GM12878 (cell line): ENCODE measurements at regions of chr7 and their contacts with region 1.

Region 1: GRCh38 chr7:114865564-114865963 is 56.3 kb upstream of the MDFIC start:
- DNase-seq: peak; percentile 25
- ATAC-seq: peak; percentile 99
- H3K4me3 ChIP-seq: no peak overlapping the region
- H3K27ac ChIP-seq: no peak overlapping the region
- H3K4me1 ChIP-seq: no peaks in the 10 kb centered on the region
- H3K27me3 ChIP-seq: no peaks in the 10 kb centered on the region
- CTCF ChIP-seq: peak; percentile 78 to 88 (median 79)
- EP300 ChIP-seq: no peak
- POLR2A ChIP-seq: no peak
- RAD21 ChIP-seq: peak; percentile 98

Region 2: GRCh38 chr7:114548081-114548980 is 317.2 kb before region 1 on chr7:
- CTCF ChIA-PET with region 1: no interaction called
- POLR2A ChIA-PET with region 1: no interaction called
- RAD21 ChIA-PET with region 1: no interaction called
- SMC1A ChIA-PET with region 1: no interaction called
- in situ Hi-C with region 1: no loop called
- intact Hi-C with region 1: no loop called
- DNase-seq: no peak
- ATAC-seq: peak; percentile 49
- H3K4me3 ChIP-seq: no peak overlapping the region
- H3K27ac ChIP-seq: no peak overlapping the region
- H3K4me1 ChIP-seq: no peaks in the 10 kb centered on the region
- H3K27me3 ChIP-seq: no peaks in the 10 kb centered on the region
- CTCF ChIP-seq: no peak
- EP300 ChIP-seq: no peak
- POLR2A ChIP-seq: no peak
- RAD21 ChIP-seq: no peak

Region 3: GRCh38 chr7:114806590-114807162 is 58.9 kb before region 1 on chr7:
- CTCF ChIA-PET with region 1: no interaction called
- POLR2A ChIA-PET with region 1: no interaction called
- RAD21 ChIA-PET with region 1: no interaction called
- SMC1A ChIA-PET with region 1: no interaction called
- in situ Hi-C with region 1: no loop called
- intact Hi-C with region 1: no loop called
- DNase-seq: no peak
- ATAC-seq: no peak
- H3K4me3 ChIP-seq: no peak overlapping the region
- H3K27ac ChIP-seq: no peak overlapping the region
- H3K4me1 ChIP-seq: no peaks in the 10 kb centered on the region
- H3K27me3 ChIP-seq: no peaks in the 10 kb centered on the region
- CTCF ChIP-seq: no peak
- EP300 ChIP-seq: no peak
- POLR2A ChIP-seq: no peak
- RAD21 ChIP-seq: no peak

Region 4: GRCh38 chr7:114916261-114916892 is 50.8 kb after region 1 on chr7:
- CTCF ChIA-PET with region 1: interaction called, 9 read pairs
- POLR2A ChIA-PET with region 1: interaction called, 5 read pairs
- RAD21 ChIA-PET with region 1: interaction called, 23 read pairs
- SMC1A ChIA-PET with region 1: interaction called, 33 read pairs
- in situ Hi-C with region 1: no loop called
- intact Hi-C with region 1: loop called (anchors 2 kb)
- DNase-seq: peak; percentile 85
- ATAC-seq: peak; percentile 91
- H3K4me3 ChIP-seq: peak overlapping the region; percentile 54; the same call in 1 of the 2 replicates
- H3K27ac ChIP-seq: peak overlapping the region; percentile 95
- H3K4me1 ChIP-seq: peaks cover 19% of the 10 kb centered on the region
- H3K27me3 ChIP-seq: no peaks in the 10 kb centered on the region
- CTCF ChIP-seq: no peak
- EP300 ChIP-seq: peak in 1 of 2 experiments; percentile 93; a peak in 3 of 4 replicates
- POLR2A ChIP-seq: peak; percentile 78
- RAD21 ChIP-seq: no peak

Region 5: GRCh38 chr7:114939484-114940097 is 74.0 kb after region 1 on chr7:
- CTCF ChIA-PET with region 1: interaction called, 107 read pairs
- POLR2A ChIA-PET with region 1: interaction called, 3 read pairs
- RAD21 ChIA-PET with region 1: interaction called, 109 read pairs
- SMC1A ChIA-PET with region 1: interaction called, 150 read pairs
- in situ Hi-C with region 1: no loop called
- intact Hi-C with region 1: loop called (anchors 5 kb)
- DNase-seq: no peak
- ATAC-seq: peak; percentile 51
- H3K4me3 ChIP-seq: no peak overlapping the region
- H3K27ac ChIP-seq: no peak overlapping the region; the same call in 1 of the 2 replicates
- H3K4me1 ChIP-seq: peaks cover 47% of the 10 kb centered on the region
- H3K27me3 ChIP-seq: no peaks in the 10 kb centered on the region
- CTCF ChIP-seq: peak; percentile 44 to 57 (median 55); a peak in 5 of 6 replicates
- EP300 ChIP-seq: no peak
- POLR2A ChIP-seq: no peak
- RAD21 ChIP-seq: peak; percentile 63

Region 6: DNA sequence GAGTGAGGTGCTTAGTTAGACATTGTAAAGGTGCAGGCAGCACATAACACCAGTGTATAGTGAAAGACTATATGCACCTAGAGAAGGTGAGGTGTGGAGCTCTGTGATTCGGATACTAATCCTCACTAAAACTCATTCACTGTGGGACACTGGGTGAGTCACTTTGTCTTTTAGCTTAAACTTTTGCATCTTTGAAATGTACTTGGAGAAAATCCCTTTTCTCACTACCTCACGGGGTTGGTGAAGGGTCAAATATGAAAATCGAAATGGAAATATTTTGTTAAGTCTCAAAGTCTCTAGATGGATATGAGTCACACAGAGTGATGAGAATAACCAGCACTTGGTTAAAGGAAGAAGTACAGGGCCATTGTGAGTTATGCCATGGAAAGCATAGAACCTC is 94.4 kb after region 1 on chr7:
- CTCF ChIA-PET with region 1: interaction called, 7 read pairs
- POLR2A ChIA-PET with region 1: interaction called, 3 read pairs
- RAD21 ChIA-PET with region 1: interaction called, 6 read pairs
- SMC1A ChIA-PET with region 1: interaction called, 11 read pairs
- in situ Hi-C with region 1: no loop called
- intact Hi-C with region 1: no loop called
- DNase-seq: peak; percentile 38
- ATAC-seq: peak; percentile 83
- H3K4me3 ChIP-seq: peak overlapping the region; percentile 10; the same call in 1 of the 2 replicates
- H3K27ac ChIP-seq: no peak overlapping the region
- H3K4me1 ChIP-seq: peaks cover 12% of the 10 kb centered on the region; the same call in 1 of the 2 replicates
- H3K27me3 ChIP-seq: no peaks in the 10 kb centered on the region
- CTCF ChIP-seq: no peak
- EP300 ChIP-seq: no peak
- POLR2A ChIP-seq: no peak
- RAD21 ChIP-seq: no peak

Region 7: DNA sequence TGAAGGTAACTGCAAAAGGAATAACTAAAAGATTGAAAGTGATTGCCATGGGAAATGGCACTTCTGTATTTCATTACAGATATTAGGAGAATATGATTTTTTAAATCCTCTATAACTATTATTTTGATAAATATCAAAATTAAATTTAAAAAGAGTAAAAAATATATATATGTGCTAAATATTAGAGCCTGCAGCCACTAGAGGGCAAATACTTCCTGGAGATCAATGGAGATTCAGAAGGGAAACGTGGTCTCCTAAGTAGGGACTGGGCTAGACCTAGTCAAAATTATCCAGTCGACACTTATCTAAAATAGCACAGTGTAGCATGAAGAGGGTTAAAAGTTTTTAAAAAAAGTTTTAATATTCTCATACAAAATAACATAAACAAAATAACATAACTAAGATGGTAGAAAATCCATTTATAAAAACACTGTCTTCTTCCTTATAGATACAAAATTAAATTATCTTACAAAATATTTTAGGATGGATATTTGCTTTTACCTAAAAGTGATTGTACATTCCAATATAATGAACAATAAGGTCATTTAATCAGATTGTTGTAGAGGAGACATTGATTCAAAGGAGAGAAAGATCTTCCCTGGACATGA is 490.7 kb after region 1 on chr7:
- CTCF ChIA-PET with region 1: interaction called, 8 read pairs
- POLR2A ChIA-PET with region 1: no interaction called
- RAD21 ChIA-PET with region 1: interaction called, 6 read pairs
- SMC1A ChIA-PET with region 1: interaction called, 4 read pairs
- in situ Hi-C with region 1: no loop called
- intact Hi-C with region 1: loop called (anchors 5 kb)
- DNase-seq: no peak
- ATAC-seq: peak; percentile 55
- H3K4me3 ChIP-seq: no peak overlapping the region
- H3K27ac ChIP-seq: no peak overlapping the region
- H3K4me1 ChIP-seq: no peaks in the 10 kb centered on the region
- H3K27me3 ChIP-seq: no peaks in the 10 kb centered on the region
- CTCF ChIP-seq: peak; percentile 22 to 41 (median 37); a peak in 4 of 6 replicates
- EP300 ChIP-seq: no peak
- POLR2A ChIP-seq: no peak
- RAD21 ChIP-seq: peak; percentile 49

Region 8: DNA sequence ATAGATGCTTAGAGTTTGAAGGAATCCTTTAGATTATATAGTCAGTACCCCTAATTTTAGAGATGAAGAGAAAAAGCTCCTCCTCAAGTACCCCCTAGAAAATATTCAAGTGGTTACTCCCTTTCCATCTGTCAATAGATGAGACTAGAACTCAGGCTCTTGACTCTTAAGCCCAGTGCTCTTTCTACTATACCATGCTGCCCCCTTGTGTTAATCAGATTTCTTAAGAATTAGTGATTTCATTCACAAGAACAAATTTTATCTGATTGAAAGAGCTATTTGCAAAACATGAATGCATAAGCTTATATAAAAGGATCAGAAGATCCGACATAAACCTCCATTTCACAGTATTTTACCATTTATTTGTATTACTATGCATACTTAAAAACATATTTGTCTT is 985.7 kb after region 1 on chr7:
- CTCF ChIA-PET with region 1: interaction called, 23 read pairs
- POLR2A ChIA-PET with region 1: no interaction called
- RAD21 ChIA-PET with region 1: interaction called, 15 read pairs
- SMC1A ChIA-PET with region 1: interaction called, 10 read pairs
- in situ Hi-C with region 1: no loop called
- intact Hi-C with region 1: no loop called
- DNase-seq: no peak
- ATAC-seq: peak; percentile 57
- H3K4me3 ChIP-seq: no peak overlapping the region
- H3K27ac ChIP-seq: no peak overlapping the region
- H3K4me1 ChIP-seq: no peaks in the 10 kb centered on the region
- H3K27me3 ChIP-seq: no peaks in the 10 kb centered on the region; a peak in 1 of 4 replicates
- CTCF ChIP-seq: peak; percentile 13 to 55 (median 20); a peak in 4 of 6 replicates
- EP300 ChIP-seq: no peak
- POLR2A ChIP-seq: no peak
- RAD21 ChIP-seq: peak; percentile 73